Gastrocnemius medialis (tissue), 4 donors: ENCODE measurements at regions of chr10 and their contacts with region 1.

Region 1: DNA sequence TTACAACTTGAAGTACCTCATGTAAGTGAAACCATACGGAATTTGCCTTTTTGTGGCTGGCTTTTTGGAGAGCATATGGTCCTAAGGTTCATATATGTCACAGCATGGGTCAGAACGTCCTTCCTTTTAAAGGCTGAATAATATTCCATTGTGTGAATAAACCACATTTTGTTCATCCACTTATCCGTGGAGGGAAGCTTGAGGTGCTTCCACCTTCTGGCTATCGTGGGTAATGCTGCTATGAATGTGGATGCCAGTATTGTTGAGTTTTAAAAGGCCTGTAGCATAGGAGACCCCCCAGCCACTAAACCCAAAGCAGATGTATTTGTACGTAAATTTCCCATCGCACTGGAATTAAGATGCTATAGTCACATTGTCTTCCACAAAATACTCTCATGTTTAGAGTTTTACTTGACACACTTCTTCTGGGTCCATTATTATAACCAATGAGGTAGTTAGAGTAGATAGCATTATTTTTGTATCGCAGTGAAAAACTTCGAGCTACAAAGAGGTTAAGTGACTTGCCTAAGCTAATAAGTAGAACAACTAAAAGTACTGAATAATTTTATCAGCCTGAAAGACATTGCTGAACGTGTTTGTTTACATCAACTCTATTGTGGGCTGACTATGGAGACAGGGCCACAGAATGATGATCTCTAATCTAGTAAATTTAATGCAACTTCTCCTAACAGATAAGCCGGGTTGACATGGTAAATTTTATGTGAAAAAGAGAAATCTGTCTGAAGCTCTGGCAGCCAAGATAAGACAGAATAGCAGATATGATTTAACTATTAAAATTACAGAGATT is 183.0 kb upstream of the CTBP2 start:
- DNase-seq: no peak
- ATAC-seq: peak; percentile 42 to 61
- H3K4me3 ChIP-seq: no peak overlapping the region
- H3K27ac ChIP-seq: no peak overlapping the region
- H3K4me1 ChIP-seq: no peaks in the 10 kb centered on the region
- H3K27me3 ChIP-seq: no peaks in the 10 kb centered on the region
- CTCF ChIP-seq: peak; percentile 43 to 73 (median 63)
- POLR2A ChIP-seq: no peak

Region 2: GRCh38 chr10:125048101-125048864 is 295.0 kb before region 1 on chr10:
- in situ Hi-C with region 1: loop called (anchors 10 to 25 kb)
- intact Hi-C with region 1: loop called (anchors 5 kb)
- DNase-seq: peak; percentile 69 to 82
- ATAC-seq: peak; percentile 63 to 79
- H3K4me3 ChIP-seq: peak overlapping the region in 1 of 4 donors; percentile 2
- H3K27ac ChIP-seq: peak overlapping the region; percentile 15 to 69 (median 24)
- H3K4me1 ChIP-seq: peaks cover 71 to 91% of the 10 kb centered on the region in 2 donors
- H3K27me3 ChIP-seq: no peaks in the 10 kb centered on the region
- CTCF ChIP-seq: peak; percentile 95 to 98 (median 98)
- POLR2A ChIP-seq: no peak

Region 3: DNA sequence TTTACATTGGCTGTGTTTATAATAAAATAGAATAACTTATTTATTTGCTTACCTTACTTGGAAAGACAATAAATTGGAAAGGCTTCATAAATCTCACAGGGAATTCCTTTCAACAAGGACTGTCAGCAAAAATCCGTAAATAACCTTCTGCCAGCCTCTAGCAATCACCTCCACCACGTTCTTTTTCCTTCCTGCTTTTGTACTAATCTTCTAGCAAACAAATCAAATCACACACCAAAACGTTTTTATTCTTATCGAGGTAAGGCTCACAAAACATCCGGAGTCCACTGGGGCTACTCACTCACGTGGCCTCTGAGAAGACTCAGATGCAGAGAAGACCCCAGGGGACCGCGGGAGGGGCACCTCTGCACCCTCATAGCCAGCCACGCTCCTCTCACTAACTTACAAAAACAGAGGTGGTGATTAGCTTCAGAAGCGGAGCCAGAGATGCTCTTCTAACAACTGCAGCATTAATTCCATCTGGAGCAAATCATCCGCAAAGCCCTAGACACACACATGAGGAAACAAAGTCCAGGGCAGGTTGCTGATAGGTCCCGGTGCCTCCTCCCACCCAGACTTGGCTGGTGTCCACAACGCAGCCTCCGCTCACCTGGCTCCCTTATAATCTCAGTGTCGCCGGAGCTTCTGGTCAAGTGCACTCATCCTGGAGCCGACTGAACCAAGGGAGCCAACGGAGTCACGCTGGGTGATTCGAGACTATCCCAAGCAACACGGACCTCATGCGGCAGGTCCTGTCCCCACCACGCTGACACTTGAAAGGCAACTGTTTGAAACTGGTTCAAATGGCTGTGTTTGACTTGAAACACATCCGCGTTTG is 205.5 kb before region 1 on chr10:
- in situ Hi-C with region 1: no loop called
- intact Hi-C with region 1: no loop called
- DNase-seq: peak in 1 of 2 donors; percentile 59
- ATAC-seq: peak; percentile 50 to 54
- H3K4me3 ChIP-seq: peak overlapping the region in 1 of 4 donors; percentile 19
- H3K27ac ChIP-seq: peak overlapping the region; percentile 29 to 55 (median 50)
- H3K4me1 ChIP-seq: peaks cover 63 to 79% of the 10 kb centered on the region in 2 donors
- H3K27me3 ChIP-seq: no peaks in the 10 kb centered on the region
- CTCF ChIP-seq: no peak
- POLR2A ChIP-seq: no peak

Region 4: GRCh38 chr10:125190946-125191345 is 152.4 kb before region 1 on chr10:
- in situ Hi-C with region 1: loop called in 1 of 4 experiments (anchors 25 kb)
- intact Hi-C with region 1: no loop called
- DNase-seq: no peak
- ATAC-seq: no peak
- H3K4me3 ChIP-seq: no peak overlapping the region
- H3K27ac ChIP-seq: no peak overlapping the region
- H3K4me1 ChIP-seq: no peaks in the 10 kb centered on the region
- H3K27me3 ChIP-seq: no peaks in the 10 kb centered on the region
- CTCF ChIP-seq: no peak
- POLR2A ChIP-seq: no peak